ENCODE measurements at regions of chr3 and their contacts with region 1.

Region 1: DNA sequence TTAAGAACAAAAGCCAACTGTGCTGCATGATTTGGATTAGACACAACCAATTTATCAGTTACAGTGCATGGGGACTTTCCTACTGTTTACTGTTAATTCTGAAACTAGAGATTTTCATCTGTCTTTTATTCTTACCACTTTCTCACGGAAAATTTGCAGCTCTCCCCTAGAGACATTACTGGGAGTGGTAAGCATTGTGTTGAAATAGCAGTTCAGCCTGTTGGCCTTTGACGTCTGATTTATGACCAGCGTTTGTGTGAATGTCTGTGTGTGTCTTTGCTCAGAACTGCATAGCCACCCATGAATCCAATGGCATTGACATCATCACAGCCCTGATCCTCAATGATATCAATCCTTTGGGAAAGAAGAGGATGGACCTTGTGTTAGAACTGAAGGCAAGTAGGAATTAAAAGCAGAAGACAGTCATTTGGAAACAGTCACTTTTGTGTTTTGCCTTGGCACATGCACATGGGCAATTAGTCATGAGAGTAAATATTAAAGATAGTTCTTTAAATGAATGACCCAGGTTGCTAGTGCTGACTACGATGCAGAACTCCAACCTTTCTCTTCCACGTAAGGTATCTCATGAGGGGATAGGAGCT is 202.2 kb upstream of the BHLHE40 start:
- DNase-seq: no peak
- ATAC-seq: no peak
- H3K4me3 ChIP-seq: no peak overlapping the region
- H3K4me3 Mint-ChIP-seq: peak overlapping the region in 1 of 10 donors; percentile 87
- H3K27ac ChIP-seq: no peak overlapping the region
- H3K27ac Mint-ChIP-seq: peak overlapping the region in 3 of 9 donors; percentile 11 to 98 (median 11)
- H3K4me1 ChIP-seq: no peaks in the 10 kb centered on the region
- H3K4me1 Mint-ChIP-seq: peaks cover 0 to 68% (median 4%) of the 10 kb centered on the region in 7 donors
- H3K27me3 ChIP-seq: no peaks in the 10 kb centered on the region
- H3K27me3 Mint-ChIP-seq: no peaks in the 10 kb centered on the region

Region 2: DNA sequence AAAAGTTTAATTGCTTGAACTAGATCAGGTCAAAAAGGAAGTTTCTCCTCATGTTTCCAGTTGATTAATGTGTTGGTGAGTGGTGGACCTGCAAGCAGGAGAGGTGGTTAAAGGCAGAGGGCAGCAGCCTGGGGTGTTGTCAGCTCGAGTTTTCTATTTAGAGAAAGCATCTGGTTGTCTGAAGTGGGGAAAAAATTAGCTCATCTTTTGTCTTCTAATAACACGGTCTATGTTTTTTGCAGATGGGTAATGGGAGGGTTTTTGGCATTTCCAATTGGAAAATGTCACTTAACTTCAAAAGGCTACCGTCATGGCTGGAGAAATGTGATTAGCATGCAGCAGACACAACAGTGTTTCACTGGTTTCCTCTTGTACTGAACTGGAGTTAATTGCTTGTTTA is 161.3 kb before region 1 on chr3:
- CTCF ChIA-PET with region 1: no interaction called
- POLR2A ChIA-PET with region 1: no interaction called
- intact Hi-C with region 1: no loop called
- DNase-seq: no peak
- ATAC-seq: no peak
- H3K4me3 ChIP-seq: no peak overlapping the region
- H3K4me3 Mint-ChIP-seq: peak overlapping the region in 1 of 10 donors; percentile 5
- H3K27ac ChIP-seq: no peak overlapping the region
- H3K27ac Mint-ChIP-seq: no peak overlapping the region
- H3K4me1 ChIP-seq: no peaks in the 10 kb centered on the region
- H3K4me1 Mint-ChIP-seq: peaks cover 0 to 26% (median 17%) of the 10 kb centered on the region in 7 donors
- H3K27me3 ChIP-seq: no peaks in the 10 kb centered on the region
- H3K27me3 Mint-ChIP-seq: no peaks in the 10 kb centered on the region

Region 3: GRCh38 chr3:4741404-4742307 is 35.4 kb before region 1 on chr3:
- CTCF ChIA-PET with region 1: no interaction called
- POLR2A ChIA-PET with region 1: no interaction called
- intact Hi-C with region 1: loop called in 1 of 2 experiments (anchors 2 kb)
- DNase-seq: no peak
- ATAC-seq: peak; percentile 39
- H3K4me3 ChIP-seq: no peak overlapping the region
- H3K4me3 Mint-ChIP-seq: peak overlapping the region in 6 of 10 donors; percentile 26 to 75 (median 66)
- H3K27ac ChIP-seq: no peak overlapping the region
- H3K27ac Mint-ChIP-seq: peak overlapping the region in 5 of 9 donors; percentile 22 to 94 (median 67)
- H3K4me1 ChIP-seq: peaks cover 37 to 43% of the 10 kb centered on the region in 2 donors
- H3K4me1 Mint-ChIP-seq: peaks cover 44 to 70% (median 51%) of the 10 kb centered on the region in 7 donors
- H3K27me3 ChIP-seq: no peaks in the 10 kb centered on the region
- H3K27me3 Mint-ChIP-seq: no peaks in the 10 kb centered on the region

Measured in naive thymus-derived CD4-positive, alpha-beta T cell (primary cell).